ENCODE measurements at regions of chr4 and their contacts with region 1.

Region 1: GRCh38 chr4:146273204-146273901 is 59.0 kb downstream of the REELD1 start:
- DNase-seq: peak; percentile 94
- ATAC-seq: peak; percentile 78
- H3K4me3 ChIP-seq: peak overlapping the region; percentile 6; the same call in 1 of the 2 replicates
- H3K27ac ChIP-seq: peak overlapping the region; percentile 81
- H3K4me1 ChIP-seq: peaks cover 66% of the 10 kb centered on the region
- H3K27me3 ChIP-seq: no peaks in the 10 kb centered on the region
- CTCF ChIP-seq: no peak
- EP300 ChIP-seq: peak; percentile 76 to 79; a peak in 2 of 4 replicates
- POLR2A ChIP-seq: peak; percentile 48; the same call in 1 of the 2 replicates
- RAD21 ChIP-seq: peak; percentile 5; the same call in 1 of the 2 replicates

Region 2: GRCh38 chr4:145180298-145181090 is 1092.9 kb before region 1 on chr4 and contains the start of gene OTUD4:
- CTCF ChIA-PET with region 1: no interaction called
- POLR2A ChIA-PET with region 1: no interaction called
- RAD21 ChIA-PET with region 1: no interaction called
- SMC1A ChIA-PET with region 1: no interaction called
- in situ Hi-C with region 1: no loop called
- intact Hi-C with region 1: loop called (anchors 10 kb)
- DNase-seq: peak; percentile 79
- ATAC-seq: peak; percentile 81
- H3K4me3 ChIP-seq: peak within 1 kb of the TSS; percentile 91
- H3K27ac ChIP-seq: peak within 1 kb of the TSS; percentile 95
- H3K4me1 ChIP-seq: peaks cover 25% of the 10 kb centered on the region
- H3K27me3 ChIP-seq: no peaks in the 10 kb centered on the region
- CTCF ChIP-seq: peak; percentile 20 to 44 (median 23); a peak in 4 of 6 replicates
- EP300 ChIP-seq: peak; percentile 33 to 50; a peak in 1 of 4 replicates
- POLR2A ChIP-seq: peak; percentile 80
- RAD21 ChIP-seq: peak; percentile 51; the same call in 1 of the 2 replicates
- polyA plus RNA-seq, gene OTUD4: 2.8 to 4.4 TPM

Region 3: DNA sequence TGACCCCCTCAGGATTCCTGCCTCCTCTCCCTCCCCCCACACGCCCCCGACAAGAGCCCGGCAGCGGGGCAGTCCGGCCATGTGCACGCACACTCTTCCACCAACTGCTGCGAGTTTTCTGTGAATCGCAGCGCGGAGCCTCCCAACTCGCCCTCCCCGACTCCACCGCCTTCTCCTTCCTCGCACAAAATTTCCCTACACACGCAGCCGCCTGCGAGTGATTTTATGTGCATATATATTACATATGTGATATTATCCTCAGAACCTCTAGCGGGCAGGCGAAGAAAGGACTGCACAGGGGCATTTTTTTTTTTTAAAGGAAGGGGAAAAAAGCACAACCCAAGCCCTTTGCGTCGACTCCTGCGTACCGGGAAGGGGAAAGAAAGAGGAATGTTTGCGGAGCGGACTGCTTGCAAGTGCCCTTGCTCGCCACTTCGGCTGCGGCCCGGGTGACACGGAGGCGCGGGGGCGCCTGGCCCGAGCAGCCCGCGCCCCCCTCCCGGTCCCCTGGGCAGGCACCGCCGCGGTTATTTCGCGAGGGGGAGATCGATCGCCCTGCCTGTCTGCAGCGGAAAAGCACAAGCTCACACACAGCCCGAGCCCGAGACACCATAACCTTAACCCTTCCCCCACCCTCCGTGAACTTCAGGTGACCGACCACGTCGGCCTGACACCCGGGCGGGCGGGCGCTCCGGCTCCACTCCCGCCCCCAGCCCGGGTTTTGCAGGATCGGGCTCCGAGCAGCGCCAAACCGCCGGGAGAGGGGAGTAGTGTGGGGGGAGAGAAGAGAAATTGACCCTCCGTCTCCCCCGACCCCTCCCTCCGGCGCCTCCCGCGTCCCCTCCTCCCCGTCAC is 337.0 kb before region 1 on chr4:
- CTCF ChIA-PET with region 1: no interaction called
- POLR2A ChIA-PET with region 1: interaction called, 4 read pairs
- RAD21 ChIA-PET with region 1: no interaction called
- SMC1A ChIA-PET with region 1: interaction called, 3 read pairs
- in situ Hi-C with region 1: no loop called
- intact Hi-C with region 1: loop called (anchors 2 kb)
- DNase-seq: no peak
- ATAC-seq: peak; percentile 70
- H3K4me3 ChIP-seq: peak overlapping the region; percentile 93
- H3K27ac ChIP-seq: peak overlapping the region; percentile 88
- H3K4me1 ChIP-seq: no peaks in the 10 kb centered on the region
- H3K27me3 ChIP-seq: no peaks in the 10 kb centered on the region
- CTCF ChIP-seq: peak; percentile 2 to 34 (median 19); a peak in 1 of 6 replicates
- EP300 ChIP-seq: no peak
- POLR2A ChIP-seq: peak; percentile 68; the same call in 1 of the 2 replicates
- RAD21 ChIP-seq: 0 out of 2 replicates have a peak, but pooled peaks have one; percentile 17

Region 4: GRCh38 chr4:146243141-146243882 is 30.0 kb before region 1 on chr4:
- CTCF ChIA-PET with region 1: interaction called, 7 read pairs
- POLR2A ChIA-PET with region 1: interaction called, 3 read pairs
- RAD21 ChIA-PET with region 1: interaction called, 9 read pairs
- SMC1A ChIA-PET with region 1: no interaction called
- in situ Hi-C with region 1: no loop called
- intact Hi-C with region 1: loop called (anchors 1 kb)
- DNase-seq: peak; percentile 45
- ATAC-seq: peak; percentile 85
- H3K4me3 ChIP-seq: no peak overlapping the region
- H3K27ac ChIP-seq: no peak overlapping the region
- H3K4me1 ChIP-seq: peaks cover 24% of the 10 kb centered on the region
- H3K27me3 ChIP-seq: no peaks in the 10 kb centered on the region
- CTCF ChIP-seq: peak; percentile 58 to 77 (median 73)
- EP300 ChIP-seq: no peak; a peak in 1 of 4 replicates
- POLR2A ChIP-seq: no peak
- RAD21 ChIP-seq: peak; percentile 27; the same call in 1 of the 2 replicates

Region 5: DNA sequence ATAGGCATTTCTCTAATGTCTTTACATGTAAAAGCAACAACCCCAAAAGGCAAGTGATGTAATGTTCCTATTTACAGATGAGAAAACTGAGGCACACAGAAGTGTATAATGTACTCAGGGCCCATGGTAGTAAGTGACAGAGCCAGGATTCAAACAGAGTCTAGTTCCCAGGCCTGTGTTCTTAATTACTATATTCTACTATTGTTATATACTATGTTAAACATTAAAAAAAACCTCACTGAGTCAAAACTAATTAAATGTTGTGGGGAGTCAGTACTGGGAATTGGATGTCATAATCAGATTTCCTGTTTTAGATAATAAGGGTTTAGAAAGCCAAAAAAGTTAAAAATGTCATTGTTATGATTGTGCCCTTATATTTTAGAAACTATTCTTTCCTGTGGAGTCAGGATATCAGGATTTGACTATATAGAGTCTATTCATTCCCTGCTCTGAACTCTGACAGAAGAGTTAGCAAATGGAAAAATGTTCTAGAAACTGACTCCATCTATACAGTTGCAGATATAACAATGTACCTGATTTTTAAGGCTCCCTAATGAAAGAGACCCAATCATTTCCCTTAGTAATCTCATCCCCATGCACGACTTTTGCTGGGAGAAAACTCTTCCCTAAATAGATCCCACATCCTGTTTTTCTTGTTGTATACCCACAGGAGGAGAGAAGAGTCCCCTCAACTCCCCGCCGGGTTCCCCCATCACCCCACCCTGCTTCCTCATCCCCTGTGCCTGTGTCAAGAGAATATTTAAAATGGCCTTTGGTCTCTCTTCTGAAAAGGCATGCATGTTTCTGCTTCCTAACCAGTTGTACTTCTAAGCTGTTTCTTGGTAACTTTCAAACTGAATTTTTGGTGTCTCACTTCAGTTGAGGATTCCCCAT is 10.7 kb after region 1 on chr4:
- CTCF ChIA-PET with region 1: interaction called, 15 read pairs
- POLR2A ChIA-PET with region 1: interaction called, 4 read pairs
- RAD21 ChIA-PET with region 1: interaction called, 11 read pairs
- SMC1A ChIA-PET with region 1: interaction called, 32 read pairs
- in situ Hi-C with region 1: no loop called
- intact Hi-C with region 1: no loop called
- DNase-seq: no peak
- ATAC-seq: peak; percentile 20; the same call in 2 of the 3 replicates
- H3K4me3 ChIP-seq: no peak overlapping the region
- H3K27ac ChIP-seq: no peak overlapping the region
- H3K4me1 ChIP-seq: no peaks in the 10 kb centered on the region
- H3K27me3 ChIP-seq: no peaks in the 10 kb centered on the region
- CTCF ChIP-seq: no peak
- EP300 ChIP-seq: no peak
- POLR2A ChIP-seq: no peak
- RAD21 ChIP-seq: no peak

Region 6: GRCh38 chr4:146462251-146462650 is 188.9 kb after region 1 on chr4:
- CTCF ChIA-PET with region 1: no interaction called
- POLR2A ChIA-PET with region 1: no interaction called
- RAD21 ChIA-PET with region 1: no interaction called
- SMC1A ChIA-PET with region 1: no interaction called
- in situ Hi-C with region 1: no loop called
- intact Hi-C with region 1: no loop called
- DNase-seq: no peak
- ATAC-seq: no peak
- H3K4me3 ChIP-seq: no peak overlapping the region
- H3K27ac ChIP-seq: no peak overlapping the region
- H3K4me1 ChIP-seq: no peaks in the 10 kb centered on the region; the same call in 1 of the 2 replicates
- H3K27me3 ChIP-seq: no peaks in the 10 kb centered on the region
- CTCF ChIP-seq: no peak
- EP300 ChIP-seq: no peak
- POLR2A ChIP-seq: no peak
- RAD21 ChIP-seq: no peak

Region 7: GRCh38 chr4:146522098-146522868 is 248.9 kb after region 1 on chr4:
- CTCF ChIA-PET with region 1: no interaction called
- POLR2A ChIA-PET with region 1: interaction called, 4 read pairs
- RAD21 ChIA-PET with region 1: interaction called, 13 read pairs
- SMC1A ChIA-PET with region 1: interaction called, 9 read pairs
- in situ Hi-C with region 1: no loop called
- intact Hi-C with region 1: loop called (anchors 10 kb)
- DNase-seq: peak; percentile 46
- ATAC-seq: peak; percentile 82
- H3K4me3 ChIP-seq: peak overlapping the region; percentile 98
- H3K27ac ChIP-seq: peak overlapping the region; percentile 88
- H3K4me1 ChIP-seq: no peaks in the 10 kb centered on the region
- H3K27me3 ChIP-seq: no peaks in the 10 kb centered on the region
- CTCF ChIP-seq: no peak
- EP300 ChIP-seq: peak; percentile 33 to 47; a peak in 1 of 4 replicates
- POLR2A ChIP-seq: peak; percentile 83
- RAD21 ChIP-seq: no peak

Measured in GM12878 (cell line).